ENCODE measurements at regions of chr19 and their contacts with region 1.

Region 1: GRCh38 chr19:39328046-39328705 is 7.5 kb upstream of the LRFN1 start:
- DNase-seq: peak; percentile 97
- ATAC-seq: peak; percentile 84
- H3K4me3 ChIP-seq: no peak overlapping the region
- H3K27ac ChIP-seq: peak overlapping the region; percentile 2
- H3K4me1 ChIP-seq: peaks cover 7% of the 10 kb centered on the region; the same call in 1 of the 2 replicates
- H3K27me3 ChIP-seq: no peaks in the 10 kb centered on the region
- CTCF ChIP-seq: no peak

Region 2: DNA sequence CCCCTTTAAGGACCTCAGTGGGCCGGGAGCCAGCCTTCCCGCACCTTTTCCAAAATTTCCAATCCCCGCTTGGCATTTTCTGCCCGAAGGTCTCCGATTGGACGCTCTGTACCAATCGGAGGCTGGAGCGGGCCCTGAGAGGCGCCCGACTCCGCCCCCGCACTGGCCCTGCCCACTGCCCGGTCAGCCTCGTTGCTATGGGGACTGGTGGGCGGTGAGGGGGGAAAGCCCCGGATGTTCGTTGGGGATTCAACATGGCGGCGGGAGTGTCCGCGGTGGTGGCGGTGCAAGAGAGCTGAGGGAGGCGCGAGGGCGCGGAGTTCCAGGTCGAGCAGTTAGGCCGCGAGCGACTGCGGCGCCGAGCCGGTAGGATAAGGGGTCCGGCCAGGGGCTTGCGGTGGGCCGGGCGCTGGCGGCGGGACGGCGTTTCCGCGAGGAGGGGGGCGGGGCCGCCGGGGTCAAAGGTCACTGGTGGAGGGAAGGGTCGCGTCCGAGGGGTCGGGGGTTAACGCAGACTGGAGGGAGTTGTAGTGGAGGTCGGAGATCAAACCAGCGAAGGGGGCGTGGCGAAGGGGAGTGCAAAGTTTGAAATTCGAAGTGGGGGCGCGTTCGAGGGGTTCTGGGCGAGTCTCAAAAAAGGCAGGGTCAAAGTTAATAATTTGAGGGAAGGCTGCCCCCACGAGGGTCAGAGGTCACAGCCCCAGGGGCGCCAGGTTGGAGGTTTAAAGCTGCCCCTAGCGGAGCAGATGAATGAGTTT is 202.4 kb before region 1 on chr19 and contains the start of gene PAK4:
- CTCF ChIA-PET with region 1: interaction called, 16 read pairs
- POLR2A ChIA-PET with region 1: no interaction called
- in situ Hi-C with region 1: no loop called
- intact Hi-C with region 1: loop called (anchors 2 kb)
- DNase-seq: peak; percentile 99
- ATAC-seq: peak; percentile 95
- H3K4me3 ChIP-seq: peak within 1 kb of the TSS; percentile 63 to 90
- H3K27ac ChIP-seq: peak within 1 kb of the TSS; percentile 89
- H3K4me1 ChIP-seq: peaks cover 46% of the 10 kb centered on the region
- H3K27me3 ChIP-seq: no peaks in the 10 kb centered on the region
- CTCF ChIP-seq: no peak
- total RNA-seq, gene PAK4: 311 TPM

Region 3: DNA sequence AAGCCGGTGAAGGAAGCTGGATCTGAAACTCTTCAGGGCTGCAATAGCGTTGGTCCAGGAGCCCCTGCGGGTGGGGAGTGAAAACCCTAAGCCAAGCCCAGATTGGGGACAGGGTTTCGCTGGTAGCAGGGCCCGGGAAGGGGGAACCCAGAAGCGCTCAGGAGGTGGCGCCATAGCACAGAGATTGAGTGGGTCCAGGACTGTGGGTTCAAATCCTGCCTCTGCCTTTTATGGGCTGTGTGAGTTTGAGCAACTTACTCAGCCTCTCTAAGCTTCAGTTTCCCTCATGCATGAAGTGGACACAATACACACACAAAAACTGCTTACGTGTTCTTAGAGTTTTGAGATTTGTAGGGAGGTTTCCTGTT is 115.8 kb before region 1 on chr19:
- CTCF ChIA-PET with region 1: interaction called, 78 read pairs
- POLR2A ChIA-PET with region 1: interaction called, 7 read pairs
- in situ Hi-C with region 1: no loop called
- intact Hi-C with region 1: loop called (anchors 1 kb)
- DNase-seq: peak; percentile 75
- ATAC-seq: peak; percentile 90
- H3K4me3 ChIP-seq: no peak overlapping the region
- H3K27ac ChIP-seq: no peak overlapping the region
- H3K4me1 ChIP-seq: no peaks in the 10 kb centered on the region
- H3K27me3 ChIP-seq: no peaks in the 10 kb centered on the region
- CTCF ChIP-seq: no peak

Region 4: DNA sequence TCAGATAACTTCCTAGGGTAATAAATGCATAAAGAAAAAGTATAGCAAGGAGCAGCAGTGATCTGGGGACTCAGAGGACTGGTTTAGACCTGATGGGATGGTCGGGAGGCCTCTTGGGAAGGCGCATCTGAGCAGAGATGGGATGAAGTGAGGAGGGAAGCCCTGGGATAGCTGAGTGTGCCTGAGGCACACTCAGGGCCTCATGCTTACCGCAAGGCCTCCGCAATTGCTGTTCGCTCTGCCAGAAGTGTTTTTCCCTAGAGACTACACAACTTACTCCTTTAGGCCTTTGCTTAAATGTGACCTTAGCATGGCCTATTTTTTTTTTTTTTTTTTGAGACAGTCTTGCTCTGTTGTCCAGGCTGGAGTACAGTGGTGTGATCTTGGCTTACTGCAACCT is 166.5 kb after region 1 on chr19:
- CTCF ChIA-PET with region 1: interaction called, 17 read pairs
- POLR2A ChIA-PET with region 1: interaction called, 3 read pairs
- in situ Hi-C with region 1: no loop called
- intact Hi-C with region 1: no loop called
- DNase-seq: no peak
- ATAC-seq: no peak
- H3K4me3 ChIP-seq: no peak overlapping the region
- H3K27ac ChIP-seq: no peak overlapping the region
- H3K4me1 ChIP-seq: peaks cover 20% of the 10 kb centered on the region
- H3K27me3 ChIP-seq: peaks cover 4% of the 10 kb centered on the region
- CTCF ChIP-seq: no peak

Region 5: GRCh38 chr19:39590265-39590664 is 262.1 kb after region 1 on chr19:
- CTCF ChIA-PET with region 1: no interaction called
- POLR2A ChIA-PET with region 1: no interaction called
- in situ Hi-C with region 1: no loop called
- intact Hi-C with region 1: no loop called
- DNase-seq: no peak
- ATAC-seq: no peak
- H3K4me3 ChIP-seq: no peak overlapping the region
- H3K27ac ChIP-seq: no peak overlapping the region
- H3K4me1 ChIP-seq: no peaks in the 10 kb centered on the region
- H3K27me3 ChIP-seq: peaks cover 77% of the 10 kb centered on the region
- CTCF ChIP-seq: peak; percentile 33; the same call in 1 of the 2 replicates

Region 6: GRCh38 chr19:40081411-40081810 is 753.2 kb after region 1 on chr19:
- CTCF ChIA-PET with region 1: no interaction called
- POLR2A ChIA-PET with region 1: no interaction called
- in situ Hi-C with region 1: no loop called
- intact Hi-C with region 1: no loop called
- DNase-seq: no peak
- ATAC-seq: no peak
- H3K4me3 ChIP-seq: no peak overlapping the region
- H3K27ac ChIP-seq: no peak overlapping the region
- H3K4me1 ChIP-seq: peaks cover 12% of the 10 kb centered on the region; the same call in 1 of the 2 replicates
- H3K27me3 ChIP-seq: no peaks in the 10 kb centered on the region
- CTCF ChIP-seq: no peak

Measured in Panc1 (cell line).